ENCODE measurements at regions of chr14 and their contacts with region 1.

Region 1: DNA sequence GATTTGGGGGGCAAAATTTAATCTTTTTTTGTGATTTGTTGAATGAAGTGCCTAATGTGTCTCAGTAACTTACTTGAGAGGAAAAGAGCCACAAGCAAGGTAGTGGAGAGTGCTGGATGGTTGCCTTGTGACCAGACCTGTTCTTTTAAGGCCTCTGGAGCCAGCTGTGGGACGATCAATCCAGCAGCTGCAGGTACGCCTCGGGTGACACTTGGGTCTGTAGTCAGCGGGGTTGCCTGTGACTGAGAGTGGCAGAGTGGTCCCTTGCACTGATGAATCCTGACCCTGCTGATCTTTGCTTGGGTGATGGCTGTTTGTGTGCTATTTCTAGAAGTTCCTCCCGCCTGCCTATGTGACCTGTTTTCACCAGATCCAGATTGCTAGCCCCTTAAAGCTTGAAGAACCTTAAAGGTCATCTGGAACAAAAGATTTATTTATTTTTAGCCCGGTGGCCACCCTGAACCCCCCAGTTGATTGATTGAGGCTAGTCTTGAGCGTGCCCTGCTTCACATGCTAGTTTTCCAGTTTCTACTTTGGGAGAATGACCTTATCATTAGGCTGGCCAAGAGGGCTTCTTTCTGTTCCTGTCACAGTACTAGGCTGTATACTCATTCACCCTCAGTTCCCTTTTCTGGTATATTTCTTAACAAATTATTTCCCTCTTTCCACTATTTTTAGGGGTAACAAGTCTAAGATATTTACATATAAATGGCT is 23.2 kb downstream of the PRKCH start:
- DNase-seq: no peak
- H3K4me3 ChIP-seq: no peak overlapping the region
- H3K27ac ChIP-seq: peak overlapping the region; percentile 27
- H3K4me1 ChIP-seq: peaks cover 77% of the 10 kb centered on the region
- H3K27me3 ChIP-seq: no peaks in the 10 kb centered on the region
- CTCF ChIP-seq: no peak
- POLR2A ChIP-seq: no peak

Region 2: DNA sequence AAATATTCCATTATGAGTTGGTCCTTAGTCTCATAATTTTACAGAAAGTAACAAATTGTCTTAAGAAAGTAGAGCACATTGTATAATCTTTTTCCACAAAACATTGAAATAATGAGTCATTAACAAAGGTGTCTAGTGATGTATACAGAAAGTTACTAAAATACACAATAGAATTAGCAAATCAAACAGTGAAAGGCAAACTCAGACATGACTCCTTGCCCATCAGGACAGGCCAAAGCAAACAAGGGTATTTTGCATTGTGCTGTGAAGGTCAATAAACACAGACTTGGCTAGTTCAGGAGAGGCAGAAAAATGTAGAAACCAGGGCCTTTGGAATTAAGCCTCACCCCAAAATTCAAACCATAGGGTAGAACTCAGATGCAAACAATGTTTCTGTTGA is 657.7 kb before region 1 on chr14:
- CTCF ChIA-PET with region 1: no interaction called
- POLR2A ChIA-PET with region 1: no interaction called
- dilution Hi-C with region 1: no loop called
- intact Hi-C with region 1: no loop called
- DNase-seq: no peak
- H3K4me3 ChIP-seq: no peak overlapping the region
- H3K27ac ChIP-seq: no peak overlapping the region
- H3K4me1 ChIP-seq: no peaks in the 10 kb centered on the region
- H3K27me3 ChIP-seq: no peaks in the 10 kb centered on the region
- CTCF ChIP-seq: no peak
- POLR2A ChIP-seq: no peak

Region 3: DNA sequence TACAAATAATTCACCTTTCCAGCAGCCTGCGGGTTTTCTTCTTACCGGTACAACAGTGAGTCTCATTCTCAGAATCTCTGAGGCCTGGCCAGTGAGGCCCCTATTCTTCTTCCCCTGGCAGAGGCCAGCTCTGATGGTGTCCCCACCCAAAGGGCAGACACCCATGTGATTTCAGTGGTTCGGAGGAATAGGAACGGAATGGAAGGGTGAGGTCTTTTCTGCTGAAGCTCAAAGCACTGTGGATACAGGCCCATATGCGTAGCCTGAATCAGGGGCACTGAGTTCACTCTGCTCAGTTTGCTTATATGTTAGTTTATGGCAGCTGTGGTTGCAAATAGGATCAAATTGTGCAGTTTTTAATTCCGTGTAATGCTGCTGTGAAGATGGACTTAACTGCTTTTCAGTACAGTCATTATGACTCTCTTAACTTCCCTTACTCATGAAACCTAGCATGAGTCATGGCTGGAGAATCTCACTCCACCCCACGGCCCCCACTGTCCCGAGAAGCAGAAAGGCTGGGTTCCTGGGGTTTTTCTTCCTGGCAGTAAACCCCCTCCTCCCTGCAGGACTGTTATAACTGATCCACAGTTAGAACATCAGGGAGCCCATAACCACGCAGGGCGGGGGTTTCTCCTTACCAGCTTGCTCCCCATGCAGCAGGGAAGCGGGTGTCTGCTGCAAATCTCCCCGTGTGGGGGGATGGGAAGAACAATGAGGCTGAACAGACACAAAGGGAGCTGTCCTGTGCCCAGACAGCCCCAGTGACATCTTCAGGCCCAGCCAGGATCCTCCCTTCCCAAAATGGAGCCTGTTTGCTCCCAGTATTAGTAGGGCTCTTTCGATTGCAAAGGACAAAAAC is 240.9 kb before region 1 on chr14:
- CTCF ChIA-PET with region 1: no interaction called
- POLR2A ChIA-PET with region 1: no interaction called
- dilution Hi-C with region 1: no loop called
- intact Hi-C with region 1: no loop called
- DNase-seq: peak; percentile 94
- H3K4me3 ChIP-seq: peak overlapping the region in 1 of 3 experiments; percentile 17
- H3K27ac ChIP-seq: peak overlapping the region; percentile 100
- H3K4me1 ChIP-seq: peaks cover 66% of the 10 kb centered on the region
- H3K27me3 ChIP-seq: no peaks in the 10 kb centered on the region
- CTCF ChIP-seq: no peak
- POLR2A ChIP-seq: peak; percentile 52

Region 4: GRCh38 chr14:61308198-61308597 is 36.4 kb before region 1 on chr14:
- CTCF ChIA-PET with region 1: no interaction called
- POLR2A ChIA-PET with region 1: interaction called, 4 read pairs
- dilution Hi-C with region 1: no loop called
- intact Hi-C with region 1: loop called (anchors 1 kb)
- DNase-seq: peak; percentile 96
- H3K4me3 ChIP-seq: no peak overlapping the region
- H3K27ac ChIP-seq: peak overlapping the region; percentile 89
- H3K4me1 ChIP-seq: peaks cover 28% of the 10 kb centered on the region
- H3K27me3 ChIP-seq: no peaks in the 10 kb centered on the region
- CTCF ChIP-seq: no peak
- POLR2A ChIP-seq: peak; percentile 84

Region 5: GRCh38 chr14:61761959-61762786 is 417.6 kb after region 1 on chr14 and contains the start of gene SNAPC1:
- CTCF ChIA-PET with region 1: no interaction called
- POLR2A ChIA-PET with region 1: no interaction called
- dilution Hi-C with region 1: no loop called
- intact Hi-C with region 1: no loop called
- DNase-seq: peak; percentile 98
- H3K4me3 ChIP-seq: peak within 1 kb of the TSS; percentile 63 to 86 (median 83)
- H3K27ac ChIP-seq: peak within 1 kb of the TSS; percentile 66
- H3K4me1 ChIP-seq: peaks cover 29% of the 10 kb centered on the region
- H3K27me3 ChIP-seq: no peaks in the 10 kb centered on the region
- CTCF ChIP-seq: no peak
- POLR2A ChIP-seq: peak; percentile 89
- total RNA-seq, gene SNAPC1: 12.7 and 21.8 TPM in 2 replicates